WTC11 (cell line): ENCODE measurements at regions of chr9 and their contacts with region 1.

Region 1: GRCh38 chr9:134326724-134327601 is 708 bp downstream of the RXRA start:
- DNase-seq: no peak
- ATAC-seq: peak; percentile 10
- H3K4me3 Mint-ChIP-seq: peak overlapping the region; percentile 60
- H3K27ac Mint-ChIP-seq: no peak overlapping the region
- H3K4me1 Mint-ChIP-seq: peaks cover 37% of the 10 kb centered on the region
- H3K27me3 Mint-ChIP-seq: no peaks in the 10 kb centered on the region
- CTCF ChIP-seq: no peak

Region 2: DNA sequence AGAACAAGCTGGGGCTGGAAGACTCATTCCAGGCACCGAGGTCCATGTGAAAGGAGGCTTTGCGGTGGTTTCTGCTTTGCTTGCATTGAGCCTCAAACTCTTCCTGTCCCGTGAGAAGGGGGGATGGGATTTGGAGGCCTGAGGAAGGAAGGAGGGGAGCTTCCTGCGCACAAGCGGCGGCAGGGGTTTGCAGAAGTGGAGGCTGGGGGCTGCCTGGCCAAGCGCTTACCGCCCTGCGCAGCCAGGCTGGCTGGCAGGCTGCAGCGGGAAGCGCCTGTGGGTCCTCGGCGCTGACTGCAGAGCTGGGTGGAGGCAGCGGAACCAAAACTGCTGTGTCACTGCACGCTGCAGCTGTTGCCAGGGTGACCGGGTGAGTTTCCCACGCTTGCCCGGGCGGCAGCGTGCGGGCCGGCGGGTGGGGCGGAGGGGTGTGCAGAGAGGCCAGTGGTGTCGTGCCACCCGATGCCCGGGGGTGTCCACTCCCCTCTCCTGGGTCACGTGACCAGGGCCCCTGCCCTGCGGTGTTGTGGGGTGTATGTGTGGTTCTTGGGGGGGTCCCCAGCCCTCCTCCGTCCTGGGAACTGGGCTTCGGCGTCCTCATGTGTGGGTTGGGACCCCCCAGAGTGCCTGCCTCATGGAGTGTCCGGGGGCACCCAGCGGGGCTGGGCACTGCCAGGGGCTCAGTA is 80.3 kb after region 1 on chr9:
- CTCF ChIA-PET with region 1: no interaction called
- POLR2A ChIA-PET with region 1: no interaction called
- DNase-seq: peak; percentile 40
- ATAC-seq: peak; percentile 50
- H3K4me3 Mint-ChIP-seq: no peak overlapping the region; the same call in 1 of the 2 replicates
- H3K27ac Mint-ChIP-seq: peak overlapping the region; percentile 92
- H3K4me1 Mint-ChIP-seq: peaks cover 12% of the 10 kb centered on the region
- H3K27me3 Mint-ChIP-seq: no peaks in the 10 kb centered on the region
- CTCF ChIP-seq: no peak

Region 3: GRCh38 chr9:134443168-134444037 is 116.4 kb after region 1 on chr9:
- CTCF ChIA-PET with region 1: interaction called, 11 read pairs
- POLR2A ChIA-PET with region 1: no interaction called
- DNase-seq: peak; percentile 83
- ATAC-seq: peak; percentile 83
- H3K4me3 Mint-ChIP-seq: no peak overlapping the region
- H3K27ac Mint-ChIP-seq: no peak overlapping the region
- H3K4me1 Mint-ChIP-seq: no peaks in the 10 kb centered on the region
- H3K27me3 Mint-ChIP-seq: no peaks in the 10 kb centered on the region; the same call in 1 of the 2 replicates
- CTCF ChIP-seq: peak; percentile 80

Region 4: DNA sequence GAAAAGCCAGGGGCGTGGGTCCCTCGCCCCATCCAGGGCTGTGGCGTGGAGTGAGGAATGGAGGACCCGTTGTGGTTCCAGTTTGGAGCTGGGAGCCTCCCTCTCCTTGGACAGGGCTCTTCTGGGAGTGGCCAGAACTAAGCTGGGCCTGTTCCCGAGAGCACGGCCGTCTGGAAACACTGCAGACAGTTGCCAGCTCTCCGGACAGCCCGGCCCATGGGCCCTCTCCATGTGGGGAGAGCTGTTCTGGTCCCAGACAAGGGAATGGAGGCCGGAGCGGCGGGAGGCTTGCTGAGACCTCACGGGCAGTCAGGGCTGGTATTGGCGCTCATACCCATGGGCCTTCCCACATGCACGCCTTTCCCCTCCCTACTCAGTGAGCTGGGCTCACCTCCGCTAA is 508.5 kb after region 1 on chr9:
- CTCF ChIA-PET with region 1: no interaction called
- POLR2A ChIA-PET with region 1: no interaction called
- DNase-seq: no peak
- ATAC-seq: no peak
- H3K4me3 Mint-ChIP-seq: no peak overlapping the region
- H3K27ac Mint-ChIP-seq: no peak overlapping the region
- H3K4me1 Mint-ChIP-seq: no peaks in the 10 kb centered on the region
- H3K27me3 Mint-ChIP-seq: no peaks in the 10 kb centered on the region
- CTCF ChIP-seq: no peak